Caco-2 (cell line): ENCODE measurements at regions of chr3 and their contacts with region 1.

Region 1: DNA sequence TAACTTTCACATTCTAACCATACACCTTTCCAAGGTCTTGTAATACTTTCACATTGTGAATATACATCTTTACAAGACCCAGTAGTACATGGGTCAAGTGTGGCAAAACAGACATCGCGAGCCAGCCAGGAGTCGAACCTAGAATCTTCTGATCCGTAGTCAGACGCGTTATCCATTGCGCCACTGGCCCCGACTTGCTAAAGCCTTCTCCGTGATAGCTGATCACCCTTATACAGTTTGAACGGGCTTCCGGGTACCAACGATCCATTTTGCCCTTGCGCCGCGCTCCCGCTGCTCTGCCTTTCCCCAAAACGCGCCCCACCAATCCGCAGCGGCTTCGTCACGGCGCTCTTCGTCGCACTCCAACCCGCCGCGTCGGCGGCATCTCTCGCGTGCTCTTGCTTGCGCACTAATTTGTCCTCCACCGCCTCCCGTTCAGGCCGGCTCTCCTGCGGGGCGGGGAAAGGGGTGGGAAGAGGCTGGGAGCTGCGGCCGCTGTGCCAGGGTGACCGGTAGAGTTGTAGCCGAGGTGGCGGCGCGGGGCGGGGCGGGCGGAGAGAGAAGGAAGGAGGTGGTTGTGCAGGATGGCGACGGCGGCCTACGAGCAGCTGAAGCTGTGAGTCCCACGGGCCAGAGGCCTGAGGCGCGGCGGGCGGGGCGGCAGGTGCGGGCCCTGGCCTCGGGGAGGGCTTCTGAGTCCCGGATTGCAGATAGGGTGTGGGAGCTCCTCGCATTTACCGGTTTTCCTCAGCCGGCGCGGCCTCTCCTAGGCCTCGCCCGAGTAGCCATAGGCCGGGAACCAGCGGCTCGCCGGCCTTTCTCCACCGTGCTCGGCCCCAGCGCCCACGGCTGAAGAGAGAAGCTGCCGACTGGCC is at the start of gene SACM1L:
- DNase-seq: peak; percentile 96 to 98
- H3K4me3 ChIP-seq: peak within 1 kb of the TSS; percentile 69
- H3K4me3 Mint-ChIP-seq: peak within 1 kb of the TSS; percentile 70
- H3K27ac Mint-ChIP-seq: peak within 1 kb of the TSS; percentile 96
- H3K4me1 ChIP-seq: peaks cover 19% of the 10 kb centered on the region
- H3K4me1 Mint-ChIP-seq: peaks cover 38% of the 10 kb centered on the region
- H3K27me3 ChIP-seq: no peaks in the 10 kb centered on the region
- H3K27me3 Mint-ChIP-seq: peaks cover 4% of the 10 kb centered on the region
- CTCF ChIP-seq: no peak
- total RNA-seq, gene SACM1L: 51.0 and 53.5 TPM in 2 replicates

Region 2: GRCh38 chr3:45677033-45677433 is 12.1 kb before region 1 on chr3:
- CTCF ChIA-PET with region 1: no interaction called
- POLR2A ChIA-PET with region 1: interaction called, 9 read pairs
- intact Hi-C with region 1: loop called (anchors 1 kb)
- DNase-seq: peak; percentile 77 to 80
- H3K4me3 ChIP-seq: no peak overlapping the region
- H3K4me3 Mint-ChIP-seq: peak overlapping the region; percentile 43
- H3K27ac Mint-ChIP-seq: peak overlapping the region; percentile 92
- H3K4me1 ChIP-seq: peaks cover 10% of the 10 kb centered on the region
- H3K4me1 Mint-ChIP-seq: peaks cover 14% of the 10 kb centered on the region
- H3K27me3 ChIP-seq: no peaks in the 10 kb centered on the region
- H3K27me3 Mint-ChIP-seq: no peaks in the 10 kb centered on the region
- CTCF ChIP-seq: no peak